Activated CD4-positive, alpha-beta memory T cell treated with anti-CD3 and anti-CD28 coated beads for 36 hours (primary cell): ENCODE measurements at regions of chr20 and their contacts with region 1.

Region 1: GRCh38 chr20:38842558-38842981 is 37.1 kb downstream of the PPP1R16B start:
- DNase-seq: peak; percentile 88
- H3K4me3 Mint-ChIP-seq: peak overlapping the region; percentile 71
- H3K27ac Mint-ChIP-seq: peak overlapping the region; percentile 90
- H3K4me1 Mint-ChIP-seq: peaks cover 86% of the 10 kb centered on the region
- H3K27me3 Mint-ChIP-seq: no peaks in the 10 kb centered on the region

Region 2: GRCh38 chr20:38805502-38805957 is 37.0 kb before region 1 on chr20 and contains the start of gene PPP1R16B:
- CTCF ChIA-PET with region 1: interaction called, 13 read pairs
- POLR2A ChIA-PET with region 1: interaction called, 24 read pairs
- intact Hi-C with region 1: loop called (anchors 1 kb)
- DNase-seq: peak; percentile 85
- H3K4me3 Mint-ChIP-seq: peak within 1 kb of the TSS; percentile 86
- H3K27ac Mint-ChIP-seq: peak within 1 kb of the TSS; percentile 96
- H3K4me1 Mint-ChIP-seq: peaks cover 51% of the 10 kb centered on the region
- H3K27me3 Mint-ChIP-seq: no peaks in the 10 kb centered on the region
- total RNA-seq, gene PPP1R16B: 111 to 114 TPM

Region 3: DNA sequence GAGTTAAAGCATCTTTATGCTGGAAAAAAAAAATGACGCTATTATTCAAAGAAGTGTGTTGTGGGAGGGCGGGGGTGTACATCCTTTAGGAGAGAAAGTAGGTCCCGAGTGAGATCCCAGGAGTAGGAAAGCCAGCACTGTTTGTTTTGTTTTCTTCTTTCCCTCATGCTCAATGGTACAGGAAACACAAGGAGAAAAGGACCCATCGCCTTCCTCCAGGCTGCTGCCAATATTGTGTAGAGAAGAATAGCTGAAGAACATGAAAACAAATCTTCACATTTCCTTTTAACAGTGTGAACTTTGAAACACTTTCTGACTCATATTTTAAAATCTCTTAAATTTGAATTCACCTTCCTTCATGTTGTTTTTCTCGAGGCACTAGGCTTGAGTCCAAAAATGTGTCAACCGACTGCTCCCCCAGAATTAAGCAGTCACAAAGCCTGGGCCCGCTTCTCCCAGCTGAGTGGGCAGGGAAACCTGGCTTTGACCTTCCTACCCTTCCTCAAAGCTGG is 14.7 kb before region 1 on chr20:
- CTCF ChIA-PET with region 1: interaction called, 3 read pairs
- POLR2A ChIA-PET with region 1: interaction called, 5 read pairs
- intact Hi-C with region 1: loop called (anchors 1 kb)
- DNase-seq: no peak
- H3K4me3 Mint-ChIP-seq: peak overlapping the region; percentile 7
- H3K27ac Mint-ChIP-seq: peak overlapping the region; percentile 92
- H3K4me1 Mint-ChIP-seq: peaks cover 98% of the 10 kb centered on the region
- H3K27me3 Mint-ChIP-seq: no peaks in the 10 kb centered on the region

Region 4: GRCh38 chr20:38863024-38863851 is 20.7 kb after region 1 on chr20:
- CTCF ChIA-PET with region 1: interaction called, 9 read pairs
- POLR2A ChIA-PET with region 1: interaction called, 6 read pairs
- intact Hi-C with region 1: loop called (anchors 1 kb)
- DNase-seq: peak; percentile 85
- H3K4me3 Mint-ChIP-seq: peak overlapping the region; percentile 35
- H3K27ac Mint-ChIP-seq: peak overlapping the region; percentile 89
- H3K4me1 Mint-ChIP-seq: peaks cover 66% of the 10 kb centered on the region
- H3K27me3 Mint-ChIP-seq: no peaks in the 10 kb centered on the region

Region 5: DNA sequence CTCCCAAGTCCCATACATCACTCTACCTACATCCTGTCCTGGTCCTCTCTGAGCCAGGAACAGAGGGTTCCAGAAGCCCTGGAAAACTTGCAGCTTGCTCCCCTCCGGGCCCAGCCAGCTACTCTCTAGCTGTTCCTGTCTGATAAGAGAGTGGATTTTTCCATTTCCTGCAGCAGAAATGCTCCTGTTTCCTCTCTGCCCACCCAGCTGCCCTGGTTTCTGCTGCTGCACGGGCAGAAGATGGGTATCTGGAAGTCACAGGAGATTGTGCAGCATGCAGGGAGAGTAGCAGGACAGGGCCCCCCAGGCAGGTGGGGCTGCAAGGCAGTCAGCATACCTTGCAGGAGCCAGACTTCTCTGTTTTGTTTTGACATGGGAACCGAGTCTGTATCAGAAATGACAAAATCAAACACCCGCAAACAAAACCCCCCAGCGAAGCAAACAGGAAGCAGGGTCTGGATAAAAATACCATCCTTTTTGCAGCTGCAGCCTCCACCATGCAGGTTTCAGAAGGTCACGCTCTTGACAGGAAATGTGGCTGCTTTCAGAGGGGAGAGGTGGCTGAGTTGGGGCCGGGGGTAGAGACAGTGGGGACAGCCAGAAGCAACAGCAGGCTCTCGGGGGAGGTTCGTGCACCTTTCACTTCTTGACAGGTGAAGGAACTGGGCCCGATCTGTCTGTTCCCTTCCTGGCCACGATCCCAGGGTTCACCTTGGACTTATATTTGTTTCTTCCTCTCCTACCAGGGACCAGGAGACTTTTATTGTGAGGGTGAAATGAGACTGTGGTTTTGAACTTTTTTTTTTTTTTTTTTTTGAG is 32.8 kb after region 1 on chr20:
- CTCF ChIA-PET with region 1: interaction called, 17 read pairs
- POLR2A ChIA-PET with region 1: interaction called, 33 read pairs
- intact Hi-C with region 1: loop called (anchors 1 kb)
- DNase-seq: peak; percentile 73
- H3K4me3 Mint-ChIP-seq: peak overlapping the region; percentile 69
- H3K27ac Mint-ChIP-seq: peak overlapping the region; percentile 94
- H3K4me1 Mint-ChIP-seq: peaks cover 88% of the 10 kb centered on the region
- H3K27me3 Mint-ChIP-seq: no peaks in the 10 kb centered on the region

Region 6: DNA sequence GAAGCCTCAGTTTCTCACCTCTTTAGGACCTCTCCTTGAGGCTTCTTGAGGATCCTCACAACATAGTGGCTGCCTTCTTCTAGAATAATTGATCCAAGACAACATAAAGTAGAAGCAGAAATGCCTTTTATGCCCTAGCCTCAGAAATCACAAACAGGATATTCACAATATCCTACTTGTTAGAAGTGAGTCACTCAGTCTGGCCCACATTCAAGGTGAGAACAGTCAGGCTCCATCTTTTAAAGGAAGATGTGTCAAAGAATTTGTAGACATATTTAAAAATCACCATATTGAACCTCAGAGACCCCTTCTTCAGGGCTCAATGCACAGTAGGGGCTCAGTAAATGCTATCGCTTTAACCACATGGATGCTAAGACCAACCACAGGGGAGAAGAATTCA is 62.8 kb after region 1 on chr20:
- CTCF ChIA-PET with region 1: no interaction called
- POLR2A ChIA-PET with region 1: no interaction called
- intact Hi-C with region 1: no loop called
- DNase-seq: no peak
- H3K4me3 Mint-ChIP-seq: no peak overlapping the region
- H3K27ac Mint-ChIP-seq: peak overlapping the region; percentile 47
- H3K4me1 Mint-ChIP-seq: peaks cover 5% of the 10 kb centered on the region
- H3K27me3 Mint-ChIP-seq: no peaks in the 10 kb centered on the region

Region 7: GRCh38 chr20:39019805-39020325 is 177.3 kb after region 1 on chr20:
- CTCF ChIA-PET with region 1: no interaction called
- POLR2A ChIA-PET with region 1: no interaction called
- intact Hi-C with region 1: loop called (anchors 1 kb)
- DNase-seq: peak; percentile 72
- H3K4me3 Mint-ChIP-seq: no peak overlapping the region
- H3K27ac Mint-ChIP-seq: no peak overlapping the region
- H3K4me1 Mint-ChIP-seq: peaks cover 59% of the 10 kb centered on the region
- H3K27me3 Mint-ChIP-seq: no peaks in the 10 kb centered on the region